ENCODE measurements at regions of chr6 and their contacts with region 1.

Region 1: GRCh38 chr6:125301435-125302391 is at the start of gene HDDC2:
- DNase-seq: no peak
- ATAC-seq: peak; percentile 95
- H3K4me3 ChIP-seq: peak within 1 kb of the TSS; percentile 67 to 72
- H3K27ac ChIP-seq: peak within 1 kb of the TSS; percentile 91
- H3K4me1 ChIP-seq: peaks cover 13% of the 10 kb centered on the region
- H3K27me3 ChIP-seq: peaks cover 16% of the 10 kb centered on the region; the same call in 1 of the 2 replicates
- CTCF ChIP-seq: no peak
- total RNA-seq, gene HDDC2: 88.8 TPM

Region 2: GRCh38 chr6:124961777-124962611 is 339.7 kb before region 1 on chr6 and contains the start of gene RNF217:
- CTCF ChIA-PET with region 1: no interaction called
- POLR2A ChIA-PET with region 1: no interaction called
- in situ Hi-C with region 1: no loop called
- intact Hi-C with region 1: loop called (anchors 5 kb)
- DNase-seq: no peak
- ATAC-seq: peak; percentile 83
- H3K4me3 ChIP-seq: peak within 1 kb of the TSS; percentile 69
- H3K27ac ChIP-seq: peak within 1 kb of the TSS; percentile 89
- H3K4me1 ChIP-seq: peaks cover 33% of the 10 kb centered on the region
- H3K27me3 ChIP-seq: no peaks in the 10 kb centered on the region
- CTCF ChIP-seq: no peak
- total RNA-seq, gene RNF217: 37.7 TPM

Region 3: GRCh38 chr6:125340991-125341390 is 39.3 kb after region 1 on chr6:
- CTCF ChIA-PET with region 1: no interaction called
- POLR2A ChIA-PET with region 1: no interaction called
- in situ Hi-C with region 1: no loop called
- intact Hi-C with region 1: no loop called
- DNase-seq: no peak
- ATAC-seq: no peak
- H3K4me3 ChIP-seq: no peak overlapping the region
- H3K27ac ChIP-seq: no peak overlapping the region
- H3K4me1 ChIP-seq: no peaks in the 10 kb centered on the region
- H3K27me3 ChIP-seq: peaks cover 2% of the 10 kb centered on the region; the same call in 1 of the 2 replicates
- CTCF ChIP-seq: no peak

Region 4: DNA sequence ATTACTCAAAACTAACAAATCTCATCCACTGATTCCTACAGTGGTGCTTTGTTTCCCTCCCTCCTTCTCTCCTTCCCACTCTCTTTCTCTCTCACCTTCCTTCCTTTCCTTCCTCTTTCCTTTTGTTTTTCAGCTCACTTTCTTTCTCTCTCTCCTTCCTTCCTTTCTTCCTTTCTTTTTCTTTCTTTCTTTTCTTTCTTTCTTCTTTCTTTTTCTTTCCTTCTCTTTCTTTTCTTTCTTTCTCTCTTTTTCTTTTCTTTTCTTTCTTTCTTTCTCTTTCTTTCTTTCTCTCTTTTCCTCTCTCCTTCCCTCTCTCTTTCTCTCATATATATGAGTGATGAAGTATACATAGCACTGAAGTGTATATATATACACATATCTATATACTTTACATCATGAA is 1279.6 kb after region 1 on chr6:
- CTCF ChIA-PET with region 1: no interaction called
- POLR2A ChIA-PET with region 1: no interaction called
- in situ Hi-C with region 1: no loop called
- intact Hi-C with region 1: no loop called
- DNase-seq: no peak
- ATAC-seq: no peak
- H3K4me3 ChIP-seq: no peak overlapping the region
- H3K27ac ChIP-seq: no peak overlapping the region
- H3K4me1 ChIP-seq: no peaks in the 10 kb centered on the region
- H3K27me3 ChIP-seq: no peaks in the 10 kb centered on the region
- CTCF ChIP-seq: no peak

Measured in Panc1 (cell line).